PC-9 (cell line): ENCODE measurements at regions of chr4 and their contacts with region 1.

Region 1: GRCh38 chr4:105140684-105141490 is 5.8 kb upstream of the TET2 start:
- DNase-seq: no peak
- H3K4me3 ChIP-seq: no peak overlapping the region
- H3K27ac ChIP-seq: no peak overlapping the region
- H3K4me1 ChIP-seq: no peaks in the 10 kb centered on the region
- H3K27me3 ChIP-seq: no peaks in the 10 kb centered on the region
- CTCF ChIP-seq: peak; percentile 51; the same call in 1 of the 2 replicates

Region 2: DNA sequence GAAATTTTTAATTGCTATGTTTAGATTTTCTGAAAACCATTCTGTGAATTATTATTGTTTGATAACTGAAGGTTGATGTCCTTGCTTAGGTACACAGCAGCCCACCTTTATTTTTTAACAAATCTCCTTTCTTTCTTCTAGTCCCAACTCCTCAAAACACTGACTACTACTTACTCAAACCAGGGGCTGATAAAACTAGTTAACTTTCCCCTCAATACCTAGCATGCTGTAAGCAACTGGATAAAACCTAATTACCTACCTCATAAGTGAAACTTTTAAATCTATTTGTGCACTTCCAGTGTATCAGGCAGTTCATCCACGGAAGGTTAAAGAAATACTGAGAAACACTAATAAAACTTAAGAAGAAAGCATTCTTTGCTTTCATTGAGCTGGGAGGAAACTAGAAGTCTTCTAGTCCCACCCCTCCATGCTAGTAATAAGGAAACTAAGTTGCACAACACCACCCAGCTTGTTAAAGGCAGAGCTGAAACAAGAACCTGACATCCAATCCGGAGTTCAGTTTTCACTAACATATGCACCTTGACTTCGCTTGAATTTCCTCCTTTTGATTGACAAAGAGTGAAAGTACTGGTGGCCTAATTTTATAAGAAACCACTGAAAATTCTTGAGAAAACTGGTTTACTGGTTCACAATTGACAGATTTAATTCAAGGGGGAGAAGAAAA is 174.4 kb before region 1 on chr4:
- CTCF ChIA-PET with region 1: no interaction called
- POLR2A ChIA-PET with region 1: no interaction called
- intact Hi-C with region 1: loop called (anchors 5 kb)
- DNase-seq: peak; percentile 2 to 62
- H3K4me3 ChIP-seq: no peak overlapping the region; the same call in 1 of the 2 replicates
- H3K27ac ChIP-seq: peak overlapping the region; percentile 79
- H3K4me1 ChIP-seq: peaks cover 20% of the 10 kb centered on the region
- H3K27me3 ChIP-seq: no peaks in the 10 kb centered on the region
- CTCF ChIP-seq: no peak

Region 3: DNA sequence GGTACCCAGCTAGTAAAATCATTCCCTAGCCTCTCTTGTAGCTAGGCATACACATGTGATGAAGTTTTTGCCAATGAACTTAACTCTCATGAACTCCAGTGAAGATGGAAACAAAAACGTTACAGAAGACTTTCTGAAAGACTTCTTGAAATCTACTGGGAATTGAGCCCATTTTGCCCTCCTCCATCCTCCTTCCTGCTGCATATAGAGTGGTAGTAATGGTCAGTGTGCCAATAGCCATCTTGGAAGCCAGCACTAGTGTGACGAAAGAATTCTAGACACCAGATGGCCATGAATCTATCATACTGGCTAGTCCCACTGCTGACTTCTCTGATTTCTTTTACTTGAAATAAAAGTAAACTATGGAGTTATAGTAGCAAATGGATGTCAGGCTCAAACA is 363.9 kb after region 1 on chr4:
- CTCF ChIA-PET with region 1: no interaction called
- POLR2A ChIA-PET with region 1: no interaction called
- intact Hi-C with region 1: no loop called
- DNase-seq: no peak
- H3K4me3 ChIP-seq: no peak overlapping the region
- H3K27ac ChIP-seq: no peak overlapping the region
- H3K4me1 ChIP-seq: no peaks in the 10 kb centered on the region
- H3K27me3 ChIP-seq: no peaks in the 10 kb centered on the region
- CTCF ChIP-seq: no peak